Mammary epithelial cell (primary cell): ENCODE measurements at regions of chr1 and their contacts with region 1.

Region 1: DNA sequence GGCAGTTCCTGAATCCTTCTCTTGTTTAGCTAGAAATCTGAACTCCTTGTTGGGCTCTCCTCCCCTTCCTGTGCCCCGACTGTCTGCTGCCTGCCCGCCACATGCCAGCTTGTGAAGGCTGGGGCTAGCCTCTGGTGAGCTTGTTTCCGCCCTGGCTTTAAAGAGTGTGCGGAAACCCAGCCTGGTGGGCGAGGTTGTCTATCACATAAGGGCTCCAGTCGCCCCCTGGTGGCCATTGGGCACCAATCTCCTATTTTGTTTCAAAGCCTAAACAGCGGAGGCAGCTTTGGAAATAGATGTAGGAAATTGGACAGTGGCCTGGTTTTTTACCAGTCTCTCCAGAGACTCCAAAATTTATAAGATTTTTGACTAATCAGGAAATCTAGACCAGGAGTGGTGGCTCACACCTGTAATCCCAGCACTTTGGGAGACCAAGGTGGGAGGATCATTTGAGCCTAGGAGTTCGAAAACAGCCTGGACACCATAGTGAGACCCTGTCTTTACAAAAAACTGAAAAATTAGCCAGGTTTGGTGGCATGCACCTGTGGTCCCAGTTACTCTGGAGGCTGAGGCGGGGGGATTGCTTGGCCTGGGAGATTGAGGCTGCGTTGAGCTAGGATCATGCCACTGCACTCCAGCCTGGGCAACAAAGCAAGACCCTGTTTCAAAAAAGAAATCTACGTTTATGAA is 9.8 kb downstream of the ATP8B2 start:
- DNase-seq: peak; percentile 54
- H3K4me3 ChIP-seq: no peak overlapping the region
- H3K27ac ChIP-seq: no peak overlapping the region
- H3K4me1 ChIP-seq: peaks cover 3% of the 10 kb centered on the region
- H3K27me3 ChIP-seq: no peaks in the 10 kb centered on the region
- CTCF ChIP-seq: peak; percentile 80 to 88

Region 2: GRCh38 chr1:154183045-154183915 is 151.9 kb before region 1 on chr1:
- CTCF ChIA-PET with region 1: no interaction called
- dilution Hi-C with region 1: no loop called
- in situ Hi-C with region 1: loop called in 1 of 2 experiments (anchors 10 kb)
- intact Hi-C with region 1: loop called (anchors 1 kb)
- DNase-seq: peak; percentile 99
- H3K4me3 ChIP-seq: peak overlapping the region; percentile 85 to 96 (median 91)
- H3K27ac ChIP-seq: peak overlapping the region; percentile 94
- H3K4me1 ChIP-seq: peaks cover 34% of the 10 kb centered on the region
- H3K27me3 ChIP-seq: no peaks in the 10 kb centered on the region
- CTCF ChIP-seq: peak in 1 of 2 donors; percentile 10

Region 3: GRCh38 chr1:154288661-154289060 is 46.5 kb before region 1 on chr1:
- CTCF ChIA-PET with region 1: no interaction called
- dilution Hi-C with region 1: loop called (anchors 5 kb)
- in situ Hi-C with region 1: no loop called
- intact Hi-C with region 1: no loop called
- DNase-seq: no peak
- H3K4me3 ChIP-seq: no peak overlapping the region
- H3K27ac ChIP-seq: no peak overlapping the region
- H3K4me1 ChIP-seq: no peaks in the 10 kb centered on the region
- H3K27me3 ChIP-seq: no peaks in the 10 kb centered on the region
- CTCF ChIP-seq: no peak

Region 4: DNA sequence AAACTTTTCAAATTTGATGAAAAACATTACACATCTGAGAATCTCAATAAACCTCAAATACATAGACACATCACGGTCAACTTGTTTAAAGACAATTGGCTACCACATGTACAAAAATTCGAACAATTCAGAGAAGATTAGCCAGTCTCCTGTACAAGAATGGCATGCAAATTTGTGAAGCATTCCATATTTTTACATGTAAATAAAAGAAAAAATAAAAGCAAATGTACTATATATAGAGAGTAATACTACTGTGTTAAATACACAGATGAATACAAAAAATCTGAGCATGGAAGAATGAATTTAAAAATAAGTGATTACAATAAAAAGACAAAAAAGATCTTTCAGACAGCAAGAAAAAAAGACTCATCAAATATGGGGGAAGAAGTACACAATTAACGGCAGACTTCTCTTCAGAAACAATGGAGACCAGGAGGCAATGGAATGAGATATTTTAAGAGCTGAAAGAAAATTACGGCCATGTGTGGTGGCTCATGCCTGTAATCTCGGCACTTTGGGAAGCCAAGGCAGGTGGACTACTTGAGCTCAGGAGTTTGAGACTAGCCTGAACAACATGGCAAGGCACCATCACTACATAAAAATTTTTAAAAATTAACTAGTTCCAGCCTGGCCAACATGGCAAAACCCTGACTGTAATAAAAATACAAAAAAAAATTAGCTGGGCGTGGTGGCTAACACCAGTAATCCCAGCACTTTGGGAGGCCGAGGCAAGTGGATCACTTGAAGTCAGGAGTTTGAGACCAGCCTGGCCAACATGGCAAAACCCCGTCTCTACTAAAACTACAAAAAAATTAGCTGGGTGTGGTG is 39.5 kb before region 1 on chr1:
- CTCF ChIA-PET with region 1: interaction called, 11 read pairs
- dilution Hi-C with region 1: no loop called
- in situ Hi-C with region 1: no loop called
- intact Hi-C with region 1: no loop called
- DNase-seq: no peak
- H3K4me3 ChIP-seq: no peak overlapping the region
- H3K27ac ChIP-seq: no peak overlapping the region
- H3K4me1 ChIP-seq: no peaks in the 10 kb centered on the region
- H3K27me3 ChIP-seq: no peaks in the 10 kb centered on the region
- CTCF ChIP-seq: no peak